ENCODE measurements at regions of chr16 and their contacts with region 1.

Region 1: GRCh38 chr16:81863630-81864352 is 84.7 kb downstream of the PLCG2 start:
- DNase-seq: no peak
- ATAC-seq: no peak

Region 2: GRCh38 chr16:81526935-81527334 is 336.9 kb before region 1 on chr16:
- intact Hi-C with region 1: no loop called
- DNase-seq: no peak
- ATAC-seq: peak; percentile 51

Region 3: DNA sequence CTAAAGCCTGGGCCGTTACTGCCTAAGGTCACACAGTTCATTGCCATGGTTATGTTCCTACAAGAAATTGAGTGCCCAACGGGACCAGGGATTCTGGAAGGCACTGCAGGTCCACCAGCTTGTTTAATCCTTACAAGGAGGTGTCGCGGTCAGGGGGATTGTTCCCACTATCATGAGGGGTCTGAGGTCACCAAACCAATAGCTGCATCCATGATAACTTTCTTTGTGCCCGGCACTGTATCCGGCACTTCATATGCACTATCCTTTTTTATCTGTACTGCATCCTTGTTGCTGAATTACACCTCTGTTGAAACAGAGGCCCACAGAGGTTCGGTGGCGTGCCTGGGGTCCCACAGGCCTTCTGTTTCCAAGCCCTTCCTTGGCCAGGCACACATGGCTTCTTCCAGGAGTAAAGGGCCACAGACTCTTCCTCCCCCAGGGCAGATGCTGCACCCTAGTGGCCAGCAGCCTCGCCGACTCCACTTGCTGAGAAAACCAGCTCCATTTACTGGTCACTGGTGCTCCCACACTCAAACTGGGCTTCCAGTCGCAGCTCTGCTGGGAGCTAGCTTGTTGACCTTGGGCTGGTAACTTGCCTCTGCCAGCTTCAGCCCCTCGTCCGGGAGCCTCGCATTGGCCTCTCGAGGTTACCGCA is 166.7 kb before region 1 on chr16:
- intact Hi-C with region 1: no loop called
- DNase-seq: no peak
- ATAC-seq: no peak

Region 4: DNA sequence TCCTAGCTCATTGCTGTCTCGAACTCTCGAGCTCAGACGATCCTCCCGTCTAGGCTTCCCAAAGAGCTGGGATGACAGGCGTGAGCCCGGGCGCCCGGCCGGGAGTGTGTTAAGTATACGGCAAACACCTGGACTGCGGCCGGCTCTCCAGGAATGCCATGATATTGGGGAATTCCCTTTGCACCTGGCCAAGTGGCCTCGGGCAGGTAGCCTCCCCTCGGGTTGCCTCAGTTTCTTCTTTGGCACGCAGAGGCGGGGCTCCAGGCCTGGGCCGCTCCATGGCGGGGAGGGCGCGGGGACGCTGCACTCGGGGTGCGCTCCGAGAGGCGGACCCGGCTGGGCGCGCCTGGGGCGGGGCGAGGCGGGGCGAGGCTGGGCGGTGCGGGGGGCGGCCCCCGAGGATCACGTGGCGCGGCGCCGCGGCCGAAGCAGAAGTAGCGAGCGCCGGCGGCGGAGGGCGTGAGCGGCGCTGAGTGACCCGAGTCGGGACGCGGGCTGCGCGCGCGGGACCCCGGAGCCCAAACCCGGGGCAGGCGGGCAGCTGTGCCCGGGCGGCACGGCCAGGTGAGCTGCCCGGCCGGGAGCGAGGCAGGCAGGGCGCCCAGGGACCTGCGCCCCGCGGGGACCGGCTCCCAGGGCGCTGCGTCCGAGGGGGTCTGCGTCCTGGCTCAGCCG is 84.8 kb before region 1 on chr16 and contains the start of gene PLCG2:
- intact Hi-C with region 1: loop called (anchors 10 kb)
- DNase-seq: peak; percentile 94
- ATAC-seq: peak; percentile 95
- total RNA-seq, gene PLCG2: 6.9 TPM

Region 5: DNA sequence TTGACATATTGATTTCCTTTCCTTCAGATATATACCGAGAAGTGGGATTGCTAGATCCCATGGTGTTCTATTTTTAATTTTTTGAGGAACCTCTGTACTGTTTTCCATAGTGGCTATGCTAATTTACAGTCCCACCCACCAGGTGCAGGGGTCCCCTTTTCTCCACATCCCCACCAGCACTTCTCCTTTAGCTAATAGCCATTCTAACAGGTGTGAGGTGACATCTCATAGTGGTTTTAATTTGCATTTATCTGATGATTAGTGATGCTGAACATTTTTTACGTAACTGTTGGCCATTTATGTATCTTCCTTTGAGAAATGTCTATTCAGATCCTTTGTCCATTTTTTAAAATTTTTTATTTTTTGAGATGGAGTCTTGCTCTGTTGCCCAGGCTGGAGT is 53.6 kb after region 1 on chr16:
- intact Hi-C with region 1: no loop called
- DNase-seq: no peak
- ATAC-seq: no peak

Region 6: DNA sequence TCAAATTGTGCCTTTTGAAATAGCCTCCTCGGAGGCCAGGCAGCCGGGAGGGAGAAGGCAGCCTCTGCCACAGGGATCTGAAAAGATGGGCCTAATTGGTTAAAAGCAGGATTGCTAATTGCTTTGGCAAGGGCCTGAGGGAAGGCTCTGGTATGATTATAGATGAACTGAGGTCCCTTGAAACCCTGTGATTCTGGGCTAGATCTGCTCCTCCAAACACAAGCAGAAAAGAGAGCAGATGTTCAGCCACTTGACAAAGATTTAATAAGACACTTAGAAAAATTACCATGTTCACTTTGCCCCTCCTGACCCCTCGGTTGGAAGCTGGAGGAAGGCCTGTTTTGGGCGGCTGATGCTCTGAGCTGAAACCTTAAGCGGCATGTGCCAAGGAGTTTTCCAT is 515.8 kb after region 1 on chr16:
- intact Hi-C with region 1: no loop called
- DNase-seq: no peak
- ATAC-seq: no peak